Heart left ventricle (tissue), 16 donors: ENCODE measurements at regions of chr10 and their contacts with region 1.

Region 1: GRCh38 chr10:48363617-48364355 is 57.3 kb downstream of the MAPK8 start:
- DNase-seq: peak in 3 of 5 donors; percentile 24 to 28 (median 25)
- ATAC-seq: peak in 3 of 4 donors; percentile 66 to 81 (median 80)
- H3K4me3 ChIP-seq: no peak overlapping the region
- H3K27ac ChIP-seq: peak overlapping the region in 4 of 12 donors; percentile 2 to 51 (median 50)
- H3K4me1 ChIP-seq: peaks cover 4 to 55% (median 37%) of the 10 kb centered on the region in 12 donors
- H3K27me3 ChIP-seq: no peaks in the 10 kb centered on the region
- CTCF ChIP-seq: peak; percentile 51 to 84 (median 73)
- POLR2A ChIP-seq: no peak

Region 2: DNA sequence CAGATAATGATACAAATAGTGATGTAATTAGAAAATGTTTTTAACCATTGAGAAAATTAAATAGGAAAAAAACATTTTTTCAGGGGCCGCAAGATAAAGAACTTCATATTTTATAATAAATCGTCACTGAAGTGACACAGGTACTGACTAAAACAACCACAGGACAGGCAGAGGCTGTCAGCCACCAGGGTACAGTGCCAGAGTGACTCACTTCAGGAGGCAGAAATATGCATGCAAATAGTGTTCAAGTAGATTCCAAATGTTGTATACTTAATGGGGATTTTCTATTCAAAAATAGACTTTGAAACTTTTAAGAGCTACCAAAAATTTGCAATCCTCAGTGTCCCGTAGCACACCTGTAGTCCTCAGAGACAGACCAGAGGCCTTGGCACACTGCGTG is 157.9 kb before region 1 on chr10:
- intact Hi-C with region 1: no loop called
- DNase-seq: no peak
- ATAC-seq: no peak
- H3K4me3 ChIP-seq: no peak overlapping the region
- H3K27ac ChIP-seq: no peak overlapping the region
- H3K4me1 ChIP-seq: no peaks in the 10 kb centered on the region
- H3K27me3 ChIP-seq: peaks cover 0 to 13% (median 0%) of the 10 kb centered on the region in 9 donors
- CTCF ChIP-seq: no peak
- POLR2A ChIP-seq: no peak

Region 3: DNA sequence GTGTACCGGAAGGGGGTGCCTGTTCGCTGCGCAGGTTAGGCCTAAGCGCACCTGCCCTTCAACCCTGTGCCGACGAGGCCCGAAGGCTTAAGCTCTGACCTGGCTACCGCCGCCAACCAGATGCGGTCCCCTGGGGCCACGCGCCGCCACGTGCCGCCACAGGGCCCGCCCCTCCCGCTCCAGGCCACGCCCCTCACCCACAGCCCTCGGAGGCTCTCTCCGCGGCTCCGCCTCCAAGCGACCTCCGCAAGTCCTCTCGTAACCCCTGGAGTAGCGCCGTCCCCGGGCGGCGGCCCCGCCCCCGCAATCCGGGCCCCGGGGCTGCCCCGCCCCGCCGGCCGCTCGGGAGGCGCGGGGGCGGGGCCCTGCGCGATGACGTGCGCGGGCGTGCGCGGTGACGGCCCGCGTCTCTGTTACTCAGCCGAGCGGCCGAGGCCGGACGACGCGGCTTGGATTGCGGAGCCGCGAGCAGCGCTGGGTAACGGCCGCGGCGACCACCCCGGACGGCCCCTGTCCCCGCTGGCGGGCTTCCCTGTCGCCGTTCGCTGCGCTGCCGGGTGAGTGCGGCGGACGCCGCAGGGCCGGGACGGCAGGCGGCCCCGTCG is 57.4 kb before region 1 on chr10 and contains the start of gene MAPK8:
- intact Hi-C with region 1: loop called in 1 of 10 experiments (anchors 5 kb)
- DNase-seq: peak; percentile 93 to 97 (median 95)
- ATAC-seq: peak; percentile 93 to 97 (median 96)
- H3K4me3 ChIP-seq: peak within 1 kb of the TSS; percentile 74 to 97 (median 88)
- H3K27ac ChIP-seq: peak within 1 kb of the TSS; percentile 85 to 99 (median 97)
- H3K4me1 ChIP-seq: peaks cover 0 to 37% (median 21%) of the 10 kb centered on the region in 12 donors
- H3K27me3 ChIP-seq: no peaks in the 10 kb centered on the region
- CTCF ChIP-seq: no peak
- POLR2A ChIP-seq: peak; percentile 97 to 98
- total RNA-seq, gene MAPK8: 22.8 to 36.8 (median 31.8) TPM

Region 4: DNA sequence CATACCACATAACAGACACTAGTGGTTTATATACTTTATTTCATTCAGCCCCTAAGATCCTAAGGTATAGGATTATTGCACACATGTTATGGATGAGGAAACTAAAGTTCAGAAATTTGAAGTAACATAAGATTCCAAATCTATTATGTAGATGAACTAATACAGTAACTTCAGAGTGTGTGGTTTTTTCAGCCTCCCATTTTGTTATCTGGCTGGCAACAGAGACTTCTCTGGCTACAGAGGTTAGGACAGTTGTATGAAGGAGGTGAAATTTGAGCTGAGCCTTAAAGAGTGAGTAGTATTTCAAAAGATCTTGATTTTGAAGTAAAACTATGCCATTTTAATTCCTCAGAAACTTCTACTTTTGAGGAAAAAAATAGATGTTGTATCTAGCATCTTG is 68.1 kb after region 1 on chr10:
- intact Hi-C with region 1: no loop called
- DNase-seq: no peak
- ATAC-seq: no peak
- H3K4me3 ChIP-seq: no peak overlapping the region
- H3K27ac ChIP-seq: no peak overlapping the region
- H3K4me1 ChIP-seq: no peaks in the 10 kb centered on the region
- H3K27me3 ChIP-seq: no peaks in the 10 kb centered on the region
- CTCF ChIP-seq: no peak
- POLR2A ChIP-seq: no peak

Region 5: GRCh38 chr10:48506147-48506917 is 142.5 kb after region 1 on chr10:
- intact Hi-C with region 1: loop called in 9 of 10 experiments (anchors 2 to 10 kb)
- DNase-seq: peak in 1 of 5 donors; percentile 11
- ATAC-seq: peak in 1 of 4 donors; percentile 40
- H3K4me3 ChIP-seq: no peak overlapping the region
- H3K27ac ChIP-seq: no peak overlapping the region
- H3K4me1 ChIP-seq: peaks cover 0 to 40% (median 19%) of the 10 kb centered on the region in 12 donors
- H3K27me3 ChIP-seq: no peaks in the 10 kb centered on the region
- CTCF ChIP-seq: peak in 6 of 12 donors; percentile 6 to 29 (median 18)
- POLR2A ChIP-seq: no peak

Region 6: GRCh38 chr10:48608279-48608681 is 244.5 kb after region 1 on chr10:
- intact Hi-C with region 1: loop called in 1 of 10 experiments (anchors 2 kb)
- DNase-seq: no peak
- ATAC-seq: peak in 3 of 4 donors; percentile 34 to 46 (median 44)
- H3K4me3 ChIP-seq: no peak overlapping the region
- H3K27ac ChIP-seq: peak overlapping the region in 1 of 12 donors; percentile 85
- H3K4me1 ChIP-seq: peaks cover 0 to 69% (median 11%) of the 10 kb centered on the region in 12 donors
- H3K27me3 ChIP-seq: peaks cover 0 to 13% (median 0%) of the 10 kb centered on the region in 9 donors
- CTCF ChIP-seq: peak; percentile 37 to 71 (median 55)
- POLR2A ChIP-seq: no peak

Region 7: DNA sequence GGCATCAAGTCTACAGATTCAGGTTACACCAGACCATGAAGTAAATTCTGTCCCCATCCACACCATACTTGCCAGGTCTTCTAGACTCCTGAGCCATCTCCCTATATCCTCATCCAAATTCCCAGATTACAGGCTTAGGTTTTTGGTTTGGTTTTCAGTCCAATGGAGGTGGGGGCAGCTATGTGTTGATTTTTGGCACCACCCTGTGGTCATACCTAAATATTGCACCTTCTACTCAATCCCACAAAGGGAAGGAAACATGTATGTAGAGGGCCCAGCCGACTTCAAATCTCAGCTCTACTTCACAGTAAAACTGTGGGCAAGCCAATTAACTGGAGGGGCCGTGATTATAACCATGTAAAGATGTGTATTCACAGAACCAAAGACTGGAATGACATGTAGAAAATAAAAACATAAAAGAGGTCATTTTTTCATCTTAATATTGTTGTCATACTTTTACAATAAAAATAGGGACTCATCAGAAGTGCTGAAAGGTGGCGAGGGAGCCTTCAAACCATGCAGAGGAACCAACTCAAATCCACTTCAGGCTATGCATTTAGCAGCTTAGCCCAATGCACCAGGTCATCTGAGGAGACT is 1155.3 kb after region 1 on chr10:
- intact Hi-C with region 1: loop called in 1 of 10 experiments (anchors 10 kb)
- DNase-seq: peak in 1 of 5 donors; percentile 13
- ATAC-seq: peak; percentile 52 to 73 (median 62)
- H3K4me3 ChIP-seq: no peak overlapping the region
- H3K27ac ChIP-seq: no peak overlapping the region
- H3K4me1 ChIP-seq: peaks cover 0 to 33% (median 7%) of the 10 kb centered on the region in 12 donors
- H3K27me3 ChIP-seq: no peaks in the 10 kb centered on the region
- CTCF ChIP-seq: peak; percentile 55 to 74 (median 66)
- POLR2A ChIP-seq: no peak